HEK293 (cell line): ENCODE measurements at regions of chr7 and their contacts with region 1.

Region 1: DNA sequence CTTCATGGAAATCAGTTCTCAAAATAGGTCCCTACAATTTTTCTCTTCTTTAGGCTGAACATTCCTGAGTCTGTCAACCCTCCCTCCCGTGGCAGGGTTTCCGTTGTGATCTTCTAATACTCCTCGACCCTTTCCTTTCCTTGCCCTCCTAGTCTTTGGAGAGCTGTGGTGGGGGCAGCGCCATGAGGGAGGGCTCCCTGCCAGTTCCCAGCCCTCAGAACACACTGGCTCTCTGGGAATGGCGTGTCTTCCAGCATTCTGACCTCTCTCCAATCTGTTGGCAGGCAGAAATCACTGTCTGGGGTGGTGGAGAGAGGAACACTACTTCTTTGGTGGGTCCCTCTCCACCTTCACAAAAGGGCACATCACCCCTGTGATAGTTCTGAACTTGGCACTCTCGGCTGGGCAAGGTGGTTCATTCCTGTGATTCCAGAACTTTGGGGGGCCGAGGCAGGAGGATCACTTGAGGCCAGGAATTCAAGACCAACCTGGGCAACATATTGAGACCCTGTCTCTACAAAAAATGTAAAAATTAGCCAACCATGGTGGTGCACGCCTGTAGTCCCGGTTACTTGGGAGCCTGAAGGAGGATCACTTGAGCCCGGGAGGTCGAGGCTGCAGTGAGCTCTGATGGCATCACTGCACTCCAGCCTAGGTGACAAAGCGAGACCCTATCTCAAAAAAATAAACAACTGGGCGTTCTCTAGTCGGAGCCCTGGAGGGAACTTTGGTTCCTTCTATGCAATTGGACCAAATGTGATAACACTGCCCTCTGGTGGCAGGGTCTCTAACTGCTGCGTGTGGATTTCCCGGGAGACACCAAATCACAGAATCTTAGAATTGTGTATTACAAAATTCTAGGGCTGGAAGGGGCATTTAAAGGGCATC is 13.1 kb upstream of the ARPC1A start:
- H3K4me3 ChIP-seq: no peak overlapping the region
- H3K27ac ChIP-seq: no peak overlapping the region
- H3K4me1 ChIP-seq: no peaks in the 10 kb centered on the region
- CTCF ChIP-seq: peak; percentile 56

Region 2: DNA sequence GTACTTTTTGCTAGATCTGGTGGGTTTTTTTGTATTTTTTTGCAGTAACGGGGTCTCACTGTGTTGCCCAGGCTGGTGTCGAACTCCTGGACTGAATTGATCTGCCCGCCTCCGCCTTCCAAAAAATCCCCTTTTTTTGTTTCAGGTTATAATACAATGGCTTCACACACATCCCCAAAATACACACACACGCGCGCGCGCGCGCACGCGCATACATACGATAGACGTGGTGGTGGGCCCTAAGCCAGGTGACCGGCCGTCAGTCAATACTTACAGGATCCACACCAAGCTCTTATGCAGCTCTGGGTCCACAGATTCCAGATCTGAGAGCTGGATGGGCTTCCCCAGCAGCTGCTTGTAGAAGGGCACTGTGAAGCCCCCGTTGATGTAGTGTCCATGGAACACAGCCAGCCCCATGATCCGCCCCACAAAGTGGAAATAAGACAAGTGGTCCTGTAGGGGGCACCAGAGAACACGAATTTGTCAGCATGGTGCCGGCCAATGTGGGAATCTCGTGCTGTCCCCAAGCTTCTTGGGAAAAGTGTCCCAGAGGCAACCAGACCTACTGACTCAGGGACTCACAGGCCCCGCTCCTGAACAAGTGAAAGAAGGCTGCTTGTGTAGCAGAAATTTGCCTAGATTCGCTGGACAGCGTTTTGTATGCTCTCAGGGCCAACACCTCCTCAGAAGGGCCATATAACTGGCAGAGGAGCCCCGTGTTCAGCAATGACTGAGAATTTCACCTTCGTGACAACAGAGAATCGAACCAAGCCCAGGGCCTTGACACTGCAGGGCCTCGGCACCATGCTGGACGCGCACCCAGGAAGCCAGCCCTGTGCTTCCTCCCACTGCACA is 272.2 kb before region 1 on chr7:
- CTCF ChIA-PET with region 1: interaction called, 14 read pairs
- POLR2A ChIA-PET with region 1: no interaction called
- H3K4me3 ChIP-seq: no peak overlapping the region
- H3K27ac ChIP-seq: no peak overlapping the region
- H3K4me1 ChIP-seq: no peaks in the 10 kb centered on the region
- CTCF ChIP-seq: peak; percentile 73

Region 3: DNA sequence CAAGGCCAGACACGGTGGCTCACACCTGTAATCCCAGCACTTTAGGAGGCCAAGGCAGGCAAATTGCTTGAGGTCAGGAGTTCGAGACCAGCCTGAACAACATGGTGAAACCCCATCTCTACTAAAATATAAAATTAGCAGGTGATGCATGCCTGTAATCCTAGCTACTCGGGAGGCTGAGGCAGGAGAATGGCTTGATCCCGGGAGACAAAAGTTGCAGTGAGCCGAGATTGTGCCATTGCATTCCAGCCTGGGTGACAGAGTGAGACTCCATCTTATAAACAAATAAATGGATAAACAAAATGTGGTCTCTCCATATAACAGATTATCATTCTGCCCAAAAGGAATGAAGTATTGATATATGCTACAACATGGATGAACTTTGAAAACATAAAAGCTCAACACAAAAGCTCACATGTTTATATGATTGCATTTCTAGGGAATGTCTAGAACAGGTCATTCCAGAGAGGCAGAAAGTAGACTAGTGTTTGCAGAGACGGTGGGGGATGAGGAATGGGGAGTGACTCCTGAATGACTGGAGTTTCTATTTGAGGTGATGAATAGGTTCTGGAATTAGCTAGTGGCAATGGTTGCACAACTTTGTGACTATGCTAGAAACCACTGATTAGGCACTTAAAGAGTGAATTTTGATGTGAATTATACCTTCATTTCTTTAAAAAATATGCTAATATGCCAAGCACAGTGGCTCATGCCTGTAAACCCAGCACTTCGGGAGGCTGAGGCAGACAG is 111.7 kb before region 1 on chr7:
- CTCF ChIA-PET with region 1: no interaction called
- POLR2A ChIA-PET with region 1: no interaction called
- H3K4me3 ChIP-seq: no peak overlapping the region
- H3K27ac ChIP-seq: no peak overlapping the region
- H3K4me1 ChIP-seq: no peaks in the 10 kb centered on the region
- CTCF ChIP-seq: no peak

Region 4: GRCh38 chr7:99290980-99291607 is 21.5 kb before region 1 on chr7:
- CTCF ChIA-PET with region 1: interaction called, 10 read pairs
- POLR2A ChIA-PET with region 1: no interaction called
- H3K4me3 ChIP-seq: no peak overlapping the region
- H3K27ac ChIP-seq: no peak overlapping the region
- H3K4me1 ChIP-seq: no peaks in the 10 kb centered on the region
- CTCF ChIP-seq: no peak